Heart left ventricle (tissue), 16 donors: ENCODE measurements at regions of chr11 and their contacts with region 1.

Region 1: GRCh38 chr11:58024601-58025091 is 965 bp downstream of the OR9Q1 start:
- DNase-seq: peak; percentile 83 to 89 (median 86)
- ATAC-seq: peak; percentile 92 to 96 (median 94)
- H3K4me3 ChIP-seq: no peak overlapping the region
- H3K27ac ChIP-seq: peak overlapping the region in 11 of 12 donors; percentile 51 to 85 (median 77)
- H3K4me1 ChIP-seq: peaks cover 0 to 44% (median 25%) of the 10 kb centered on the region in 12 donors
- H3K27me3 ChIP-seq: no peaks in the 10 kb centered on the region
- CTCF ChIP-seq: no peak
- POLR2A ChIP-seq: no peak

Region 2: DNA sequence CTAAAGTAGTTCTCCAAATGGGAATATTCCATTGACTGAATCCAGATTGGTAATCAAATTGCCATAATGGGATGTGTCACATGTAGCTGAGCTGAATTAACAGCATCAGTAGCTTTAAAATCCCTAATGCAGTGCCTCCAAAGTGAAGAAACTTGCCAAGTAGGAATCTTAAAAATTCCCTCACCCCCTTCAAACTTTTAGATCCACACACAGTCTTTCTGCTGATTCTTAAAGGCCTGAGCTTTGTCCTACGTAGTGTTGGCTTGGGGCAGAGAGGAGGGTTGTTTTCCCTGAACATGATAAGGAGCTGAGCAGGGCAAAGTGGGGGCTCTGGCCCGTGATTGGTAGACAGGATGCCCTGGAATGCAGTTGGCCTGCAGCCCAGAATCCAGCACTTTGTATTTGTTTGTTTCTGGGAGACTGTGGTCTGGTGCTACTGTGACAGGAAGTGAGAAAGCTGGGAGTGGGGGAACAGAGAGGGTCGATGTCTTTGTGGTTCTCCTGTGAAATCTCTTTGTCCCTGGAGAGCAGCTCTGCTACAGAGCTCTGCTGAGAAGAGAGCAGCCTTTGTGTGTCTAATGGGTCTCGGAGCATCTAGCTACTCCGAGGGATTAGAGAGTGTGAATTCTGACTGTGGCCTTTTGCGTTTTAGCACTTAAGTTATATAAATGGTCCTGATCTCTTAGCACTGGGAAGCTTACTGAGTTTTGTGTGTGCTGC is 246.2 kb before region 1 on chr11:
- intact Hi-C with region 1: loop called in 1 of 10 experiments (anchors 10 kb)
- DNase-seq: peak; percentile 91 to 97 (median 94)
- ATAC-seq: peak; percentile 90 to 94 (median 92)
- H3K4me3 ChIP-seq: peak overlapping the region in 11 of 12 donors; percentile 7 to 51 (median 23)
- H3K27ac ChIP-seq: peak overlapping the region; percentile 77 to 97 (median 91)
- H3K4me1 ChIP-seq: peaks cover 28 to 100% (median 96%) of the 10 kb centered on the region in 12 donors
- H3K27me3 ChIP-seq: no peaks in the 10 kb centered on the region
- CTCF ChIP-seq: no peak
- POLR2A ChIP-seq: peak in 1 of 2 donors; percentile 45

Region 3: GRCh38 chr11:57936050-57936418 is 88.6 kb before region 1 on chr11:
- intact Hi-C with region 1: loop called in 2 of 10 experiments (anchors 5 kb)
- DNase-seq: no peak
- ATAC-seq: peak in 2 of 4 donors; percentile 39 to 85
- H3K4me3 ChIP-seq: no peak overlapping the region
- H3K27ac ChIP-seq: peak overlapping the region in 9 of 12 donors; percentile 2 to 64 (median 42)
- H3K4me1 ChIP-seq: peaks cover 0 to 7% (median 0%) of the 10 kb centered on the region in 12 donors
- H3K27me3 ChIP-seq: no peaks in the 10 kb centered on the region
- CTCF ChIP-seq: no peak
- POLR2A ChIP-seq: no peak

Region 4: GRCh38 chr11:58004664-58005063 is 20.0 kb before region 1 on chr11:
- intact Hi-C with region 1: loop called in 1 of 10 experiments (anchors 2 kb)
- DNase-seq: peak in 1 of 5 donors; percentile 32
- ATAC-seq: peak; percentile 64 to 95 (median 82)
- H3K4me3 ChIP-seq: no peak overlapping the region
- H3K27ac ChIP-seq: peak overlapping the region; percentile 40 to 80 (median 61)
- H3K4me1 ChIP-seq: peaks cover 0 to 27% (median 5%) of the 10 kb centered on the region in 12 donors
- H3K27me3 ChIP-seq: no peaks in the 10 kb centered on the region
- CTCF ChIP-seq: no peak
- POLR2A ChIP-seq: no peak

Region 5: DNA sequence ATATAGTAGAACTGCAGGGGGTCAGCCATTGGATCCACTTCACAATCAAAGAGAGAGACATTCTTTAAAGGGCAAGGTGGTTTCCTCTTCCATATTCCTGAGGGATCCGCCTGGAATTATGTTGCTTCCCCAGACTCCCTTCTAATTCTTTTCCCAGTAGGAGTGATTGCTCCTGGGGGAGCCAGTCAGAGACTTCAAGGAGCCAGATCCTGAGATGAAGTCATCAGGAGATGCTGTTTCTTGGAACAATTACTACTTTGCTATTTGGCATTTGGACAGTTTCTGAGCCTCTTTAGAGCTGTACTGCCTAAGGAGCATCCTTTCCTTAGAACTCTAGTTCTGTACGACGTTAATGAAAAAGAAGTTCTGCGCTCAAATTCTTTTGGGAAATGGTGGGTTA is 162.3 kb after region 1 on chr11:
- intact Hi-C with region 1: loop called in 1 of 10 experiments (anchors 2 kb)
- DNase-seq: peak in 3 of 5 donors; percentile 27 to 31 (median 28)
- ATAC-seq: peak; percentile 51 to 90 (median 72)
- H3K4me3 ChIP-seq: no peak overlapping the region
- H3K27ac ChIP-seq: peak overlapping the region in 6 of 12 donors; percentile 3 to 50 (median 11)
- H3K4me1 ChIP-seq: no peaks in the 10 kb centered on the region
- H3K27me3 ChIP-seq: no peaks in the 10 kb centered on the region
- CTCF ChIP-seq: peak in 2 of 12 donors; percentile 16 to 22
- POLR2A ChIP-seq: no peak

Region 6: GRCh38 chr11:58286249-58286648 is 261.6 kb after region 1 on chr11:
- intact Hi-C with region 1: loop called in 2 of 10 experiments (anchors 10 kb)
- DNase-seq: no peak
- ATAC-seq: peak in 3 of 4 donors; percentile 50 to 59 (median 58)
- H3K4me3 ChIP-seq: no peak overlapping the region
- H3K27ac ChIP-seq: peak overlapping the region in 1 of 12 donors; percentile 7
- H3K4me1 ChIP-seq: peaks cover 0 to 5% (median 0%) of the 10 kb centered on the region in 12 donors
- H3K27me3 ChIP-seq: no peaks in the 10 kb centered on the region
- CTCF ChIP-seq: peak; percentile 28 to 65 (median 52)
- POLR2A ChIP-seq: no peak